ENCODE measurements at regions of chr11 and their contacts with region 1.

Region 1: GRCh38 chr11:46616998-46617675 is at the starts of genes ATG13 and HARBI1:
- DNase-seq: peak; percentile 92 to 95 (median 93)
- H3K4me3 ChIP-seq: peak within 1 kb of the TSS; percentile 94 to 99
- H3K4me3 Mint-ChIP-seq: peak within 1 kb of the TSS; percentile 93 to 100 (median 99)
- H3K27ac ChIP-seq: peak within 1 kb of the TSS; percentile 99
- H3K27ac Mint-ChIP-seq: peak within 1 kb of the TSS; percentile 98 to 100 (median 99)
- H3K4me1 ChIP-seq: peaks cover 53% of the 10 kb centered on the region
- H3K4me1 Mint-ChIP-seq: peaks cover 24 to 58% (median 41%) of the 10 kb centered on the region in 4 donors
- H3K27me3 ChIP-seq: no peaks in the 10 kb centered on the region
- H3K27me3 Mint-ChIP-seq: no peaks in the 10 kb centered on the region
- total RNA-seq, gene ATG13: 86.0 to 96.2 TPM
- total RNA-seq, gene HARBI1: 7.2 to 9.4 TPM

Region 2: DNA sequence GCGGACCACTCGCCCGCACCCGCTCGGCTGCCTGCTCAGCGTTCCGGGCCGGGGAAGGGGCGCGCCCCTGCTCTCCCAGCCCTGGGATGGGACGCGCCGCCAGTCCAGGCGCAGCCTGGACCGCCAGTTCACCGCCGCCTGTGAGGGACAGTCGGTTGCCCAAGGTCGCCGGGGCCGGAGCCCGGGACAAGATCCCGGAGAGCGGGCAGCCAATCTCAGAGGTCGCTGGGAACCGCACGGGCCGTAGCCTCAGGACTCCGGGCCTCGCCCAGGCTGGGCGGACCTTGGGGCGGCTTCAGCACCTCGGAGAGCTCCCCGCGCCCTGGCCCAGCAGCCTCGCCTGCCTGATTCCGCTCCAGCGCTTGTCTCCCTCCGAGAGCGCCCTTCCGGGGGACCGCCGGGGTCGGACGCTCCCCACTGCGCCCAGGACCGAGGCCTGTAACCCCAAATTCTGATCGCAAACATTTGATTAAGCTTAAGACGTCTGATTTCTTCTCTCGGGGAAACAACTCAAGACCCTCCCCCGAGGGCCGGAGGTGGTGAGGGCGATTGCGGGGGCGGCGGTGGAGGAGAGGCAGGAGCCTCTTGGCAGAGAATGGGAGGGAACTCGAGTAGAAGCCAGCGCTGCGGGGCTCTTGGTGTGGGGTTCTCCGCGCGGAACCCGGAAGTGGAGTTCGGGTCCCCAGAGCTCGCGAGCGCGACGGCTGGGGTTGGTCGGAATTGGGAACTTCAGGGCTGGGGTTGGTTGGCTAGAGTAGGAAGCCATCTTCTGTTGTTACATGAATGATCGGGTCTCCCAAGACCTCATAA is 224.5 kb before region 1 on chr11:
- CTCF ChIA-PET with region 1: interaction called, 3 read pairs
- POLR2A ChIA-PET with region 1: no interaction called
- intact Hi-C with region 1: loop called (anchors 5 kb)
- DNase-seq: peak; percentile 75 to 80 (median 76)
- H3K4me3 ChIP-seq: peak overlapping the region in 1 of 2 donors; percentile 29
- H3K4me3 Mint-ChIP-seq: peak overlapping the region; percentile 63 to 84 (median 80)
- H3K27ac ChIP-seq: no peak overlapping the region
- H3K27ac Mint-ChIP-seq: peak overlapping the region in 4 of 7 donors; percentile 15 to 81 (median 70)
- H3K4me1 ChIP-seq: peaks cover 42% of the 10 kb centered on the region
- H3K4me1 Mint-ChIP-seq: peaks cover 13 to 39% (median 24%) of the 10 kb centered on the region in 4 donors
- H3K27me3 ChIP-seq: peaks cover 23% of the 10 kb centered on the region
- H3K27me3 Mint-ChIP-seq: peaks cover 14 to 32% of the 10 kb centered on the region in 2 donors

Region 3: GRCh38 chr11:46537537-46538295 is 79.4 kb before region 1 on chr11:
- CTCF ChIA-PET with region 1: no interaction called
- POLR2A ChIA-PET with region 1: no interaction called
- intact Hi-C with region 1: loop called (anchors 5 kb)
- DNase-seq: peak; percentile 60 to 67 (median 64)
- H3K4me3 ChIP-seq: no peak overlapping the region
- H3K4me3 Mint-ChIP-seq: peak overlapping the region in 2 of 8 donors; percentile 23 to 31
- H3K27ac ChIP-seq: no peak overlapping the region
- H3K27ac Mint-ChIP-seq: peak overlapping the region in 5 of 7 donors; percentile 23 to 61 (median 29)
- H3K4me1 ChIP-seq: peaks cover 6% of the 10 kb centered on the region
- H3K4me1 Mint-ChIP-seq: peaks cover 33 to 47% (median 39%) of the 10 kb centered on the region in 4 donors
- H3K27me3 ChIP-seq: no peaks in the 10 kb centered on the region
- H3K27me3 Mint-ChIP-seq: no peaks in the 10 kb centered on the region

Region 4: DNA sequence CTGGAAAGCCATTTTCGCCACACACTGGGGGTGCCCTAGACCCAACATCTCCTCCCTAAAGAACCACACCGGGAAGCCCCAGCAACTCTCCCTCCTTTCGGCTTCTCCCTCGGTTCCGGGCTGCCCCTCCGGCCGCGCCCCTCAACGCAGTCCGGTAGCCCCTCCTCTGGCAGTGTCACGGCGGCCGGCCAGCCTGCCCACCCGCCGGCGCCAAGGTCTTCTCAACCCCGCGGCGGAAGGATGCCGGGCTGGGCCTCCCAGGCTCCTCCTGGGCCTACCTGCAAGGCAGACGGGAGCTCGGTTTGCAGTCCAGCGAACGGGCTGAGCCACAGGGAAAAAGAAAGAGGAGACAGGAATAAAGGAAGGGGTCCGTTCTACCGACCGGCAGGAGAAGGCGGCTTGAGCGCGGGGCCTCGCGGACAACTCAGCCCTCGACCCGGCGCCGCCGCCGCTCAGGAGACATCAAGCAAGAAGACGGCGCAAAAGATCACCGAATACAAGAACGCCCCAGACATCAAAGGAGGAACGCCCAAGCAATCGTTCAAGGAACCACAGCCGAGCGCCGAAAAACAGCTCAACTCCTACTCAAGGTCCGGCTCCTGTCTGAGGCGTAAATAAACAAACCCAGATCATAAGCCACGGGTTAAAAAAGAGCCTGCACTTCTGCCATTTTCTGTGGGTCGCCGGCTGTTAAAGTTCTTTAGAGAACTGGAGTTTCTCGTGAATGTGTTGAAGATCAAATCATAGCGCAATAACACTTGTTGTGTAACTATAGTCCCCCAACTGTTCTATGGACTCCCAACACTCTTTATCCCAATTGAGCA is 23.4 kb before region 1 on chr11 and contains the start of gene AMBRA1:
- CTCF ChIA-PET with region 1: interaction called, 9 read pairs
- POLR2A ChIA-PET with region 1: interaction called, 27 read pairs
- intact Hi-C with region 1: loop called (anchors 1 kb)
- DNase-seq: peak; percentile 79 to 86 (median 81)
- H3K4me3 ChIP-seq: peak within 1 kb of the TSS; percentile 78 to 99
- H3K4me3 Mint-ChIP-seq: peak within 1 kb of the TSS; percentile 94 to 99 (median 98)
- H3K27ac ChIP-seq: peak within 1 kb of the TSS; percentile 83
- H3K27ac Mint-ChIP-seq: peak within 1 kb of the TSS; percentile 90 to 97 (median 95)
- H3K4me1 ChIP-seq: peaks cover 47% of the 10 kb centered on the region
- H3K4me1 Mint-ChIP-seq: peaks cover 26 to 47% (median 40%) of the 10 kb centered on the region in 4 donors
- H3K27me3 ChIP-seq: no peaks in the 10 kb centered on the region
- H3K27me3 Mint-ChIP-seq: no peaks in the 10 kb centered on the region
- total RNA-seq, gene AMBRA1: 40.8 to 43.9 TPM

Region 5: GRCh38 chr11:46669711-46670139 is 52.6 kb after region 1 on chr11:
- CTCF ChIA-PET with region 1: interaction called, 17 read pairs
- POLR2A ChIA-PET with region 1: interaction called, 11 read pairs
- intact Hi-C with region 1: loop called (anchors 1 kb)
- DNase-seq: no peak
- H3K4me3 ChIP-seq: no peak overlapping the region
- H3K4me3 Mint-ChIP-seq: peak overlapping the region in 6 of 8 donors; percentile 28 to 70 (median 55)
- H3K27ac ChIP-seq: no peak overlapping the region
- H3K27ac Mint-ChIP-seq: peak overlapping the region; percentile 55 to 90 (median 85)
- H3K4me1 ChIP-seq: peaks cover 59% of the 10 kb centered on the region
- H3K4me1 Mint-ChIP-seq: peaks cover 29 to 65% (median 51%) of the 10 kb centered on the region in 4 donors
- H3K27me3 ChIP-seq: no peaks in the 10 kb centered on the region
- H3K27me3 Mint-ChIP-seq: no peaks in the 10 kb centered on the region

Region 6: DNA sequence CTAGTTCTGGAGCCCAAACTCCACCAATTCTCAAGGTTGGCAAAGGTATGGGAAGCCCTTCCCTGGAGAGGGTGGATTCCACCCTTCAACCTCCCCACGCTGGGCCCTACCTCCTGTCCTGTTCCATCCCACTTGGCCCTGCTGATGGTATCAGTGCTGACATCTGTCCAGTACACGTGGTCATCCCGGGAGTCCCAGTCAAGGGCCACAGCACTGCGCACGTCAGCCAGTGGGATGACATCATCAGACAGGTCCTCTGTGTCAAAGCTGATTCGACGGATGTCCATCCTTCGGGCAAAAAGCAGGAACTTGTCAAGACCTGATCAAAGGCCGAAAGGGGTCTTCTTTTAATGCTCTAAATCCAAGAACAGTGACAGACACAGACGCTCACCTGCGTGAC is 269.1 kb after region 1 on chr11:
- CTCF ChIA-PET with region 1: no interaction called
- POLR2A ChIA-PET with region 1: no interaction called
- intact Hi-C with region 1: no loop called
- DNase-seq: no peak
- H3K4me3 ChIP-seq: no peak overlapping the region
- H3K4me3 Mint-ChIP-seq: no peak overlapping the region
- H3K27ac ChIP-seq: no peak overlapping the region
- H3K27ac Mint-ChIP-seq: no peak overlapping the region
- H3K4me1 ChIP-seq: no peaks in the 10 kb centered on the region
- H3K4me1 Mint-ChIP-seq: peaks cover 0 to 2% (median 0%) of the 10 kb centered on the region in 4 donors
- H3K27me3 ChIP-seq: no peaks in the 10 kb centered on the region
- H3K27me3 Mint-ChIP-seq: peaks cover 6 to 23% of the 10 kb centered on the region in 2 donors